ENCODE measurements at regions of chr6 and their contacts with region 1.

Region 1: GRCh38 chr6:52577022-52577777 is at the start of gene TRAM2:
- DNase-seq: no peak
- H3K4me3 ChIP-seq: peak within 1 kb of the TSS; percentile 94
- H3K27ac ChIP-seq: peak within 1 kb of the TSS; percentile 89
- H3K27me3 ChIP-seq: no peaks in the 10 kb centered on the region
- CTCF ChIP-seq: no peak
- polyA plus RNA-seq, gene TRAM2: 134 and 152 TPM in 2 replicates

Region 2: GRCh38 chr6:52537001-52537753 is 40.0 kb before region 1 on chr6:
- CTCF ChIA-PET with region 1: interaction called, 12 read pairs
- POLR2A ChIA-PET with region 1: interaction called, 3 read pairs
- DNase-seq: no peak
- H3K4me3 ChIP-seq: no peak overlapping the region
- H3K27ac ChIP-seq: no peak overlapping the region
- H3K27me3 ChIP-seq: no peaks in the 10 kb centered on the region
- CTCF ChIP-seq: no peak

Region 3: GRCh38 chr6:52664186-52664990 is 87.2 kb after region 1 on chr6:
- CTCF ChIA-PET with region 1: interaction called, 20 read pairs
- POLR2A ChIA-PET with region 1: no interaction called
- DNase-seq: peak; percentile 88
- H3K4me3 ChIP-seq: peak overlapping the region; percentile 76
- H3K27ac ChIP-seq: no peak overlapping the region
- H3K27me3 ChIP-seq: no peaks in the 10 kb centered on the region
- CTCF ChIP-seq: no peak

Measured in AG04450 (cell line).